ENCODE measurements at regions of chr7 and their contacts with region 1.

Region 1: DNA sequence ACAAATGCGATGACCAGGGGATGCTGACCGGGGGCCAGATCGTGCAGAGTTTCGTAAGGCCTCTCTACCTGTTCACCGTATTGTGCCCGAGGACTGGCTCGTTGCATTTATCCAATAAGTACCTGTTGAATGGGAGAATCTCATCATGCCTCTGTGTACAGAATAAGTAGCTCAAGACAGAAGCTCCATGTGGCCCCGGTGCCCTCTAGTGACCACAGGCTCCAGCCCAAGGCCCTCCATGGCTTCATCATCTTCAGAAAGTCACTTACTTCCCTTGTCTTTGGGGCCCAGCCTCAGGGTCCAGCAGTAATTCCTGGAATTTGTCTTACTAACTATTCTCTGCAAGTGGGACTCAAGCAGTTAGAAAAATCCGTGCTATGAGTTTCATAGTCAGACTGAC is 151.0 kb downstream of the CHN2 start:
- DNase-seq: peak; percentile 44 to 66
- H3K4me3 ChIP-seq: no peak overlapping the region
- H3K27ac ChIP-seq: no peak overlapping the region
- H3K4me1 ChIP-seq: no peaks in the 10 kb centered on the region; a peak in 1 of 7 replicates
- H3K27me3 ChIP-seq: no peaks in the 10 kb centered on the region
- CTCF ChIP-seq: peak; percentile 64 to 83 (median 77)
- EP300 ChIP-seq: no peak
- POLR2A ChIP-seq: no peak
- RAD21 ChIP-seq: peak; percentile 90 to 92

Region 2: DNA sequence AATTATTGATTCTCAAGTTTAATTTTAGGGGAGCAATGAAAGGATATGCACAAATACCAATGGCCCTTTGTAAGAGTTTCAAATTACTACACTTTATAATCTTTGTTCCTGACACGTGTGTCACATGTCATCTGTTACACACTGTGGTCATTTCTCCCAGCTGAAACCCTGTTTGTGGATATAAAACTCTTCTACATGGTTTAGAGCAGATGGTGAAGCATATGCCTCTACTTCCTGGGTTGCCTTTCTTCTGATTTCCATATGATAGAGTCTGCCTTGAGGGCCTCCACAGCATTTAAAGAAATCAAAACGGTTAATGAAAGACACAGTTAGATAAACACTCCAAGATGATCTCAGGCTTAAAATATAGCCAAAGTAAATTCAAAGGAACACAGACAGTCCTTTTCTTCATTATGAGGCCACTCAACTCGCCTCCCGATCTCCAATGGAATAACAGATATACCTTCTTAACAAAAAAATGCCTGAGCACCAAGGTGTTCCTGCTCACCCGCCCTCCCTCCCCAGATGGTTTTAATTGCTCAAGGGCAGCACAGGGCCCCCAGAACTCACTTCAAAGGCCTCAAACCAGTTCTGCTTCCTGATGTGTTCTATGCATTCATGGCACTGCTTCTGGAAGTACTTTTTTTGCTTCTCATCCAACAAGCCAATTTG is 274.3 kb before region 1 on chr7:
- CTCF ChIA-PET with region 1: no interaction called
- POLR2A ChIA-PET with region 1: no interaction called
- DNase-seq: no peak
- H3K4me3 ChIP-seq: no peak overlapping the region
- H3K27ac ChIP-seq: no peak overlapping the region
- H3K4me1 ChIP-seq: 0 out of 7 replicates have a peak, but pooled peaks cover 0 to 5% (median 0%) of the 10 kb centered on the region in 4 experiments
- H3K27me3 ChIP-seq: no peaks in the 10 kb centered on the region
- CTCF ChIP-seq: no peak
- EP300 ChIP-seq: no peak
- POLR2A ChIP-seq: no peak
- RAD21 ChIP-seq: no peak

Region 3: GRCh38 chr7:29113384-29114103 is 232.1 kb before region 1 on chr7:
- CTCF ChIA-PET with region 1: interaction called, 39 read pairs
- POLR2A ChIA-PET with region 1: no interaction called
- DNase-seq: peak in 1 of 2 experiments; percentile 27
- H3K4me3 ChIP-seq: no peak overlapping the region
- H3K27ac ChIP-seq: no peak overlapping the region
- H3K4me1 ChIP-seq: peaks cover 2 to 3% (median 3%) of the 10 kb centered on the region in 4 experiments; a peak in 4 of 7 replicates
- H3K27me3 ChIP-seq: no peaks in the 10 kb centered on the region
- CTCF ChIP-seq: peak; percentile 21 to 76 (median 67)
- EP300 ChIP-seq: no peak
- POLR2A ChIP-seq: no peak
- RAD21 ChIP-seq: peak; percentile 80 to 83

Measured in H1 (cell line).